ENCODE measurements at regions of chr7 and their contacts with region 1.

Region 1: DNA sequence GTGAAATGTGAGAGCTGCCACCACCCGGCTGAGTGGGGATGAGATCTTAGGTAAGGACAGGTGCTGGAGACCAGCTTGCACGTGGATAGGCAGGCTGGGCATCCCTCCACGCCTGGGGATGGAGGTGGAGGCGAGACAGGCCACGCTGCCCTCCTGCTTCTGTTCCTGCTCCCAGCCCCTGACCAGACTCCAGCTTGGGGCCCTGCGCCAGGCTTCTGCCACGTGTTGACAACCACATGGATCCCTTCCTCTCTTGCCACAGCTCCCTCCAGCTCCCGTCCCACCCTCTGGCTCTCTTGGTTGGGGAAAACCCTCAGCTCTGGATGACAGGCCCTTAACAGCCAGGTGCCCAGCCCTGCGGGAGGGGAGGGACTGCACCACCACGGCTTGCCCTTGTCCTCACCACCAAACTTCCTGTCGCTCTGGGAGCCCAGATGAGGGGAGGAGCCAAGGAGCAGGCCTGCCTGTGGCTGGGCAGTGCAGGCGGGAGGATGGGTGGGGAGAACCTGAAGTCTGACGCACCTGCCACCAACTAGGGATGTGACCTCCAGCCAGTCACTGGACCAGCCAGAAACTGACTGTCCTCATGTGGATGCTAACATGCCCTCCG is 36.0 kb downstream of the KCNH2 start:
- DNase-seq: peak; percentile 71
- H3K4me3 ChIP-seq: no peak overlapping the region
- H3K27ac ChIP-seq: peak overlapping the region in 1 of 2 experiments; percentile 82; a peak in 2 of 4 replicates
- H3K4me1 ChIP-seq: peaks cover 0 to 84% of the 10 kb centered on the region in 2 experiments; a peak in 2 of 4 replicates
- H3K27me3 ChIP-seq: 0 out of 2 replicates have a peak, but pooled peaks cover 11% of the 10 kb centered on the region
- CTCF ChIP-seq: no peak
- EP300 ChIP-seq: 0 out of 4 replicates have a peak, but pooled peaks of 1 of the 2 experiments have one; percentile 17
- RAD21 ChIP-seq: no peak

Region 2: GRCh38 chr7:150974468-150975391 is 32.6 kb after region 1 on chr7:
- CTCF ChIA-PET with region 1: interaction called, 28 read pairs
- POLR2A ChIA-PET with region 1: interaction called, 8 read pairs
- DNase-seq: peak; percentile 82
- H3K4me3 ChIP-seq: peak overlapping the region in 1 of 2 experiments; percentile 37; a peak in 2 of 4 replicates
- H3K27ac ChIP-seq: peak overlapping the region in 1 of 2 experiments; percentile 100; a peak in 3 of 4 replicates
- H3K4me1 ChIP-seq: peaks cover 0 to 90% of the 10 kb centered on the region in 2 experiments; a peak in 2 of 4 replicates
- H3K27me3 ChIP-seq: peaks cover 71% of the 10 kb centered on the region
- CTCF ChIP-seq: peak; percentile 36
- EP300 ChIP-seq: no peak
- RAD21 ChIP-seq: peak; percentile 38; the same call in 1 of the 2 replicates

Region 3: GRCh38 chr7:151025924-151026685 is 84.0 kb after region 1 on chr7:
- CTCF ChIA-PET with region 1: no interaction called
- POLR2A ChIA-PET with region 1: no interaction called
- DNase-seq: no peak
- H3K4me3 ChIP-seq: no peak overlapping the region
- H3K27ac ChIP-seq: no peak overlapping the region
- H3K4me1 ChIP-seq: peaks cover 7 to 10% of the 10 kb centered on the region in 2 experiments; a peak in 2 of 4 replicates
- H3K27me3 ChIP-seq: peaks cover 5% of the 10 kb centered on the region; the same call in 1 of the 2 replicates
- CTCF ChIP-seq: no peak
- EP300 ChIP-seq: no peak
- RAD21 ChIP-seq: no peak